Body of pancreas (tissue), 4 donors: ENCODE measurements at regions of chr12 and their contacts with region 1.

Region 1: DNA sequence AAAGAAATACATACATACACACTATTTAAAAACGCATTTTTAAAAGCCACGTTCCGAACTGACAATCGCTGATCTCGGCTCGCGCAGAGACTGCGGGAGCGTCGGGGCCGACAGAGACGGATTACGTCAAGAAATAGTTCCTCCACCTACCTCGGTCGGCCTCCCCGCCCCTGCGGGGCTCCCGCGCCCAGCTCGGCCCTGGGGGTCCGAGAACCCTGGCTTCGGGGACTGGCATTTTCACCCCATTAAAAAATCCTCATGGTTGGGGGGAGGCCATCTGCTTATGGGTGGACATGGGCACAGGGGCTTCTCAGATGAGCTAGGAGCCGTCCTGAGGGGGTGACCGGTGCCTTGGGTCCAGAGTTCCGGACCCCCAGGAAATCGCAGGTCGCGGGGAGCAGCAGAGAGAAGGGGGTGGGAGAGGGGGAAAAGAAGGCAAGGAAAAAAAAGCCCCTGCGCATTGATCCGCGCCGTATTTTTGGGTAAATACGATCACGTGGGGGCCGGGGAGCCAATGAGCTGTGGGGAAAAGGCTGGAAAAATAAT is 329 bp upstream of the HOXC9 start:
- DNase-seq: peak in 1 of 4 donors; percentile 49
- ATAC-seq: peak; percentile 45
- H3K4me3 ChIP-seq: no peak overlapping the region
- H3K27ac ChIP-seq: no peak overlapping the region
- H3K4me1 ChIP-seq: peaks cover 38% of the 10 kb centered on the region
- H3K27me3 ChIP-seq: peaks cover 6 to 81% of the 10 kb centered on the region in 2 donors
- CTCF ChIP-seq: no peak
- POLR2A ChIP-seq: no peak

Region 2: DNA sequence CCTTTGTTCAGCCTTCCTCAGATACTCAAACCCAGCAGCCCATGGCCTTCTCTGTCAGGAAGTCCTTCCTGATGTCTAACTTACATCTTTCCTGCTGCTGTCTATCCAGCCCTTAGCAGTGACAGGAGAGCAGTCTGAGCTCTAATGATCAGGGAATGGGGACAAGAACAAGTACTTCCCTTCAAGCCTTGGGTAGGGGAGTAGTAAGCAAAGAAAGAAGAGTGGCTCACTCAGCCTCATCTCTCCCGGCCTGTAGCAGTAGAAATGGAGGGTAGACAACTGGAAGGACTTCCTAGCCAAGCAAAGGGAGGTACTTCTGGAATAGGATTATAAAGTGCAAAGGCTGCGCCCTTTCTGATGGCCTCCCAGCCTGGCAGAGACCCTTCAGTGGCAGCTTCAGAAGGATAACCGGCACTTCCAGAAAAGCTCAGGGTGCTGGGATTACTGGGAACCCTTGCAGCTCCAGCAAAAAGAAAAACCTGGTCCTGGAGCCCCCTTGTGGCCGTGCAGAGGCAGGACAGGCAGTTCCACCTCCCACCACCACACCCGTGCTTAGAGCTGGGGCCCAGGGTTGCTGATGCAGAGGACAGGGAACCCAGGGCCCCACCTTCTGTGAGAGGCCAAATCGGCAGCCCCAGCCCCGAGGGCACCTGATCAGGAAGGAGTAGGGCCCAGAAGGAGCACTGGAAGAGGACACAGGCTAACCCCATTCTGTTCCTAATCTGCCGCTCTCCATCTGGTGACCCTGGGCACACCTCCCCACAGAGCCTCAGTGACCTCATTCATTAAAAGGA is 201.6 kb after region 1 on chr12:
- intact Hi-C with region 1: loop called (anchors 5 kb)
- DNase-seq: peak; percentile 63 to 68 (median 66)
- ATAC-seq: peak; percentile 88
- H3K4me3 ChIP-seq: no peak overlapping the region
- H3K27ac ChIP-seq: no peak overlapping the region
- H3K4me1 ChIP-seq: no peaks in the 10 kb centered on the region
- H3K27me3 ChIP-seq: no peaks in the 10 kb centered on the region
- CTCF ChIP-seq: peak; percentile 90 to 99 (median 97)
- POLR2A ChIP-seq: no peak